CD8-positive, alpha-beta T cell (primary cell): ENCODE measurements at regions of chr22 and their contacts with region 1.

Region 1: DNA sequence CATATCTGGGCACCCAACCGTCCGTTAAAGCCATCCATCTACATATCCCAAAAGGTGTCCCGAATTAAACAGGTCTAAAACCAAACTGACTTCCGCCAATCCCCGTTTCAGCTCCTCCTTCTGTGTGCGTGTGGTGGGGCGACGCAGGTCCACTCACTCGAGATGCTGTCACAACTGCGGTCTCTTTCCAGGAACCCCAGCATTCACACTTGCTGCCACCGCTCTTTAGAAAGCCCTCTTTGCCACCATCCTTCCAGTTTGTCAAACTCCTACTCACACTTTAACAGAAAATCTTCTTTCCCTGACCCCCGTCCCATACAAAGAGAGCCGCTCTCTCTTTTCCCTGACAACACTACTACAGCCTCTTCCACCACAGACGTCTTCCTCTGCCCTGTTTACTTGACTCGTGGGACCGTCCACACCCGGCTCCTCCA is 467 bp downstream of the ESS2 start:
- DNase-seq: peak in 5 of 9 experiments; percentile 28 to 71 (median 51)
- ATAC-seq: peak; percentile 14
- H3K4me3 ChIP-seq: peak overlapping the region; percentile 97 to 99
- H3K4me3 Mint-ChIP-seq: peak overlapping the region; percentile 98
- H3K27ac ChIP-seq: peak overlapping the region; percentile 95 to 98
- H3K27ac Mint-ChIP-seq: peak overlapping the region; percentile 98
- H3K4me1 ChIP-seq: peaks cover 11% of the 10 kb centered on the region
- H3K4me1 Mint-ChIP-seq: peaks cover 21% of the 10 kb centered on the region
- H3K27me3 ChIP-seq: peaks cover 2% of the 10 kb centered on the region in 2 experiments
- H3K27me3 Mint-ChIP-seq: peaks cover 11% of the 10 kb centered on the region
- CTCF ChIP-seq: no peak

Region 2: DNA sequence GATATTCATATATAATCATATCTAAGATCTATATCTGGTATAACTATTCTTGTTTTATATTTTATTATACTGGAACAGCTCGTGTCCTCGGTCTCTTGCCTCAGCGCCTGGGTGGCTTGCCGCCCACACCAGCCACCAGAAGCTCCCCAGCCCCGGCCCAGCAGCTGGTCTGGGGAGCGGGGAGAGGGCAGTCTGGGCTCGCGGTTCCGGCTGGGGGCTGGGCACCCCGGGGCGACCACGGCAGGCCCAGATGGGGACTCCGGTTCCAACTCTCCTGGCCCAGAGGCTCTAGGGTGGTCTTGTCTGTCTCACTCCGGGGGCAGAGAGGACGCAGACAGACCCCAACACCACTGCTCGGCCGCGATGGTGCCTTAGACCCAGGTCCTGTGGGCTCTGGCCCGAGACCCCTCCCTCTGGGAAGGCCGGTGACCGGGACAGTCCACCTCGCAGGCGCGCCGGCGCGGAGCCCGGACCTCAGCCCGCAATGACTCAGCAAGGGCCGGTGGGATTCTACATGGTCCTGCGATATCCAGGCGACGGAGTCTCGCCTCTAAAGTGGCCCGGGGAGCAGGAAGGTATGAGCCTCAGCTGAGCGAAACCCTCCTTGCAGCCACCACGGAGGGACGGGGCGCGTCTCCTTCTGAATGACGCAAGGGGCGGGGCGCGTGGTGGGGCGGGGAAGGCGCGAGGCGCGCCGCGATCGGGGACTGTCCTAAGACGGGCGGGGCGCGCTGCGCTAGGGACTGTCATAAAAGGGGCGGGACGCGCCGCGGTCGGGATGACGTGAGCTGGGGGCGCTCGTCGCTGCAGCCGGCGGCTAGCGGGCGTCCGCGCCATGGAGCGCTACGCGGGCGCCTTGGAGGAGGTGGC is 238.2 kb before region 1 on chr22 and contains the start of gene DGCR6:
- CTCF ChIA-PET with region 1: no interaction called
- POLR2A ChIA-PET with region 1: no interaction called
- intact Hi-C with region 1: no loop called
- DNase-seq: no peak
- ATAC-seq: peak; percentile 95
- H3K4me3 ChIP-seq: no peak within 1 kb of the TSS
- H3K4me3 Mint-ChIP-seq: no peak within 1 kb of the TSS
- H3K27ac ChIP-seq: no peak within 1 kb of the TSS
- H3K27ac Mint-ChIP-seq: no peak within 1 kb of the TSS
- H3K4me1 ChIP-seq: no peaks in the 10 kb centered on the region
- H3K4me1 Mint-ChIP-seq: no peaks in the 10 kb centered on the region
- H3K27me3 ChIP-seq: no peaks in the 10 kb centered on the region
- H3K27me3 Mint-ChIP-seq: no peaks in the 10 kb centered on the region
- CTCF ChIP-seq: no peak
- total RNA-seq, gene DGCR6: 18.6 to 20.0 TPM

Region 3: GRCh38 chr22:19122143-19122751 is 21.7 kb before region 1 on chr22 and contains the start of gene DGCR2:
- CTCF ChIA-PET with region 1: interaction called, 4 read pairs
- POLR2A ChIA-PET with region 1: interaction called, 4 read pairs
- intact Hi-C with region 1: loop called (anchors 1 kb)
- DNase-seq: peak; percentile 93 to 98 (median 97)
- ATAC-seq: peak; percentile 98
- H3K4me3 ChIP-seq: peak within 1 kb of the TSS; percentile 73 to 78
- H3K4me3 Mint-ChIP-seq: peak within 1 kb of the TSS; percentile 89
- H3K27ac ChIP-seq: peak within 1 kb of the TSS; percentile 75 to 88
- H3K27ac Mint-ChIP-seq: peak within 1 kb of the TSS; percentile 90
- H3K4me1 ChIP-seq: peaks cover 49% of the 10 kb centered on the region
- H3K4me1 Mint-ChIP-seq: peaks cover 47% of the 10 kb centered on the region
- H3K27me3 ChIP-seq: no peaks in the 10 kb centered on the region
- H3K27me3 Mint-ChIP-seq: no peaks in the 10 kb centered on the region
- CTCF ChIP-seq: no peak
- total RNA-seq, gene DGCR2: 29.6 to 32.4 TPM

Region 4: GRCh38 chr22:19291580-19292457 is 147.8 kb after region 1 on chr22 and contains the start of gene CLTCL1:
- CTCF ChIA-PET with region 1: no interaction called
- POLR2A ChIA-PET with region 1: no interaction called
- intact Hi-C with region 1: loop called (anchors 1 kb)
- DNase-seq: peak; percentile 40 to 83 (median 67)
- ATAC-seq: peak; percentile 81
- H3K4me3 ChIP-seq: peak within 1 kb of the TSS; percentile 82 to 92
- H3K4me3 Mint-ChIP-seq: peak within 1 kb of the TSS; percentile 93
- H3K27ac ChIP-seq: peak within 1 kb of the TSS; percentile 38 to 55
- H3K27ac Mint-ChIP-seq: peak within 1 kb of the TSS; percentile 23
- H3K4me1 ChIP-seq: peaks cover 18% of the 10 kb centered on the region
- H3K4me1 Mint-ChIP-seq: peaks cover 24% of the 10 kb centered on the region
- H3K27me3 ChIP-seq: no peaks in the 10 kb centered on the region
- H3K27me3 Mint-ChIP-seq: peaks cover 21% of the 10 kb centered on the region
- CTCF ChIP-seq: no peak
- total RNA-seq, gene CLTCL1: 0.43 to 0.69 TPM

Region 5: GRCh38 chr22:19629720-19630419 is 485.9 kb after region 1 on chr22:
- CTCF ChIA-PET with region 1: interaction called, 13 read pairs
- POLR2A ChIA-PET with region 1: interaction called, 3 read pairs
- intact Hi-C with region 1: loop called (anchors 1 kb)
- DNase-seq: peak; percentile 74 to 92 (median 84)
- ATAC-seq: peak; percentile 94
- H3K4me3 ChIP-seq: no peak overlapping the region
- H3K4me3 Mint-ChIP-seq: no peak overlapping the region
- H3K27ac ChIP-seq: no peak overlapping the region
- H3K27ac Mint-ChIP-seq: no peak overlapping the region
- H3K4me1 ChIP-seq: peaks cover 3% of the 10 kb centered on the region
- H3K4me1 Mint-ChIP-seq: peaks cover 3% of the 10 kb centered on the region
- H3K27me3 ChIP-seq: no peaks in the 10 kb centered on the region
- H3K27me3 Mint-ChIP-seq: peaks cover 1% of the 10 kb centered on the region
- CTCF ChIP-seq: peak; percentile 78

Region 6: GRCh38 chr22:20116951-20117645 is 973.1 kb after region 1 on chr22 and contains the start of gene TRMT2A:
- CTCF ChIA-PET with region 1: no interaction called
- POLR2A ChIA-PET with region 1: no interaction called
- intact Hi-C with region 1: loop called in 1 of 2 experiments (anchors 10 kb)
- DNase-seq: peak; percentile 91 to 99 (median 96)
- ATAC-seq: peak; percentile 80
- H3K4me3 ChIP-seq: peak within 1 kb of the TSS; percentile 80 to 96
- H3K4me3 Mint-ChIP-seq: peak within 1 kb of the TSS; percentile 90
- H3K27ac ChIP-seq: peak within 1 kb of the TSS; percentile 81 to 94
- H3K27ac Mint-ChIP-seq: peak within 1 kb of the TSS; percentile 93
- H3K4me1 ChIP-seq: peaks cover 38% of the 10 kb centered on the region
- H3K4me1 Mint-ChIP-seq: peaks cover 43% of the 10 kb centered on the region
- H3K27me3 ChIP-seq: no peaks in the 10 kb centered on the region
- H3K27me3 Mint-ChIP-seq: no peaks in the 10 kb centered on the region
- CTCF ChIP-seq: no peak
- total RNA-seq, gene TRMT2A: 57.8 to 62.8 TPM